Activated naive CD4-positive, alpha-beta T cell treated with anti-CD3 and anti-CD28 coated beads, Interleukin-2, amount 10 ng/mL, durations not matched to agents 7 days and 5 days (primary cell): ENCODE measurements at regions of chr3 and their contacts with region 1.

Region 1: GRCh38 chr3:149512209-149512782 is 37.8 kb downstream of the TM4SF4 start:
- DNase-seq: peak; percentile 39
- H3K4me3 Mint-ChIP-seq: no peak overlapping the region
- H3K27ac Mint-ChIP-seq: no peak overlapping the region
- H3K4me1 Mint-ChIP-seq: no peaks in the 10 kb centered on the region
- H3K27me3 Mint-ChIP-seq: peaks cover 27% of the 10 kb centered on the region

Region 2: DNA sequence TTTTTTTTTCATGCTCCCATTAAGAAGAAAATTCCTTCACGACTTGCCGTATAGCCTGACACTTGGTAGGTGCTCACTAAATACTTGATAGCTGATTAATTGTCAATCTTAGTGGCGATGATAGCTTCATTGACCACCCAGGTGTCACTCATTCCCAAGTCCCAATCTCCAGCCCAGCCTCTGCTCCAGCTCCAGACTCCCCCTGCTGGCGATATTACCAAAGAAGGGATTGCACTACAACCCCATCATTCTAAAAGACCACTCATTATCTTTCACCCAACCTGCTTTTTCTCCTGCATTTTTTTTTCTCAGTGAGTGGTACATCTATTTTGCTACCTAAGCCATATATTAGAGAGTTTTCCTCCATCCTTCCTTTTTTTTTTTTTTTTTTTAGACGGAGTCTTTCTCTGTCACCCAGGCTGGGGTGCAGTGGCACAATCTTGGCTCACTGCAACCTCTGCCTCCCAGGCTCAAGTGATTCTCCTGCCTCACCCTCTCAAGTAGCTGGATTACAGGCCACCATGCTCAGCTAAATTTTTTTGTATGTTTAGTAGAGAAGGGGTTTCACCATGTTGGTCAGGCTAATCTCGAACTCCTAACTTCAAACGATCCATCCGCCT is 259.5 kb after region 1 on chr3:
- CTCF ChIA-PET with region 1: interaction called, 12 read pairs
- DNase-seq: peak; percentile 36
- H3K4me3 Mint-ChIP-seq: no peak overlapping the region
- H3K27ac Mint-ChIP-seq: no peak overlapping the region
- H3K4me1 Mint-ChIP-seq: no peaks in the 10 kb centered on the region
- H3K27me3 Mint-ChIP-seq: peaks cover 13% of the 10 kb centered on the region